Activated T-helper 1 cell treated with anti-CD3 and anti-CD28 coated beads, Interleukin-12 subunit alpha, Interleukin-12 subunit beta, Interleukin-2, Interleukin-4 antibody, amounts not matched to agents 30 ng/mL and 10 ng/mL and 1 ng/mL, durations not matched to agents 14 hours and 24 hours and 36 hours (primary cell): ENCODE measurements at regions of chr14 and their contacts with region 1.

Region 1: DNA sequence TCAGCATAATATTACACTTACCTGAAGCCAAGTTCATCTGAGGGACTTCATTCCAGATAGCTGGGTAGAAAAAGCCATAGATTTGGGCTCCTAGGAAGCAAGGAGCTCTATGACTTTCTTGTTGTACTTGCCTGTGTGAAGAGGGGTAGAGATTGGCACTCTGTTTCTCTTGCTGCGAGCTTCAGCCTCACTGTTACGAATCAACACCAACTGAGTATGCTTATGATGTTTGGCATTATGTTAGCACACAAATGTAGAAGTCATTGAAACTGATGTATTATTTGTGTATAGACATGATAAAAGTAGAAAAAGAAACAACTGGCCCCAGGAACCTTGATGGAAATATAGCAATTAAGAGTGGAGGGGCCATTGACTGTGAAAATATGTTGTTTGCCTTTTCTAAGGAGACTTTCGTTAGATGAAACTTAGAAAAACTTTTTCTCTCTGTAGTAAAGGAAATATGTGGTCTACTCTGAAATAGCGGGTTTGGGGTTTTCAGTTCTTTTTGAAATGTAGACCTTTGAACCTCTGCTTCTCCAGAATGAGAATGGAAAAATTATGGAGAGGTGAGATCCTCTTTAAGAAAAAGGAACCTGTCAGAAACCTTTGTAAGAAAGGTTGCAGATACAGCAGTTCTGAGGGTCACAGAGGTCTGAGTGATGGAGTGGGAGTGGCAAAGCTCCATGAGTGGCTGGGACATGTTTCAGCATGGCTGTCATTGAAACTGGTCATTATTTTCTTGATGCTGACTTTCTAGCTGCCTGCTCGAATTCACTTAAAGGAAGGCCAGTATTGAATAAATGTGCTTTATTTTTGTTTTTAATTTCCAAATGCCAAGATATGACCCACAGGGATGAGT is 159.9 kb downstream of the GCH1 start:
- DNase-seq: no peak
- H3K4me3 Mint-ChIP-seq: peak overlapping the region; percentile 10
- H3K27ac Mint-ChIP-seq: no peak overlapping the region
- H3K4me1 Mint-ChIP-seq: peaks cover 41% of the 10 kb centered on the region
- H3K27me3 Mint-ChIP-seq: peaks cover 27% of the 10 kb centered on the region

Region 2: GRCh38 chr14:54709444-54709843 is 33.3 kb before region 1 on chr14:
- intact Hi-C with region 1: loop called (anchors 2 kb)
- DNase-seq: no peak
- H3K4me3 Mint-ChIP-seq: no peak overlapping the region
- H3K27ac Mint-ChIP-seq: no peak overlapping the region
- H3K4me1 Mint-ChIP-seq: no peaks in the 10 kb centered on the region
- H3K27me3 Mint-ChIP-seq: peaks cover 4% of the 10 kb centered on the region

Region 3: GRCh38 chr14:55645145-55645544 is 902.4 kb after region 1 on chr14:
- intact Hi-C with region 1: no loop called
- DNase-seq: no peak
- H3K4me3 Mint-ChIP-seq: no peak overlapping the region
- H3K27ac Mint-ChIP-seq: no peak overlapping the region
- H3K4me1 Mint-ChIP-seq: peaks cover 5% of the 10 kb centered on the region
- H3K27me3 Mint-ChIP-seq: no peaks in the 10 kb centered on the region